Vagina (tissue), 2 donors: ENCODE measurements at regions of chr6 and their contacts with region 1.

Region 1: DNA sequence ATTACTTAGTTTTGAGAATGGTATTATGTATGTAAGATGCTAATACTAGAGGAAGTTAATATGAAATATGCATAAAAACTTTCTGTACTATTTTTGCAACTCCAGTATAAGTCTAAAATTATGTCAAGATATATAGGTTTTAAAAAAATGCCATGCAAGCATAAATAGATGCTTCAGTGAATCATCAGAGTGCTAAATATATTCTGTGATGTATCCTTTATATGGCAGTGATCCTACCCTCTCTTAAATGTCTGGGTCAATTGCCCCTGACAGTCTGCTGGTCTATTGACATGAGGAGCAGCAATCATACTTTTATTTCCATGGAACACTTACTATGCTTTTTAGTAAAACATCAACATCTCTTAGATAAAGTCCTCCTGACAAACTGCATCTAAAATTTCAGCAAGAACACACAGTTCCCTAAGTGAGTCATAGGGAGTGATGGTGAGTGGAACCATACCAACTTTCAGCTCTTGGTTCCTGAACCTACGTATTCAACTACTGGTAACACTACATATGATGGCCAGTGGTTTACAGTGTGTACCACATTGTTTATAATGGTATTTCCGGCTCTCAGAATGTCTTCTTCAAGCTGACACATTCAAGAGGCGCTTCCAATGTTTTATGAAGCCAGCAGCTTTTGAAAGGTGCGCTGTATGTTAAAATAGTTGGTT is 928.7 kb upstream of the GJE1 start:
- DNase-seq: no peak
- H3K4me3 ChIP-seq: no peak overlapping the region
- H3K27ac ChIP-seq: no peak overlapping the region
- H3K4me1 ChIP-seq: no peaks in the 10 kb centered on the region
- H3K27me3 ChIP-seq: no peaks in the 10 kb centered on the region
- CTCF ChIP-seq: no peak
- POLR2A ChIP-seq: no peak

Region 2: GRCh38 chr6:140879946-140880345 is 324.1 kb before region 1 on chr6:
- intact Hi-C with region 1: loop called (anchors 10 kb)
- DNase-seq: no peak
- H3K4me3 ChIP-seq: no peak overlapping the region
- H3K27ac ChIP-seq: no peak overlapping the region
- H3K4me1 ChIP-seq: no peaks in the 10 kb centered on the region
- H3K27me3 ChIP-seq: no peaks in the 10 kb centered on the region
- CTCF ChIP-seq: no peak
- POLR2A ChIP-seq: no peak